ENCODE measurements at regions of chr15 and their contacts with region 1.

Region 1: DNA sequence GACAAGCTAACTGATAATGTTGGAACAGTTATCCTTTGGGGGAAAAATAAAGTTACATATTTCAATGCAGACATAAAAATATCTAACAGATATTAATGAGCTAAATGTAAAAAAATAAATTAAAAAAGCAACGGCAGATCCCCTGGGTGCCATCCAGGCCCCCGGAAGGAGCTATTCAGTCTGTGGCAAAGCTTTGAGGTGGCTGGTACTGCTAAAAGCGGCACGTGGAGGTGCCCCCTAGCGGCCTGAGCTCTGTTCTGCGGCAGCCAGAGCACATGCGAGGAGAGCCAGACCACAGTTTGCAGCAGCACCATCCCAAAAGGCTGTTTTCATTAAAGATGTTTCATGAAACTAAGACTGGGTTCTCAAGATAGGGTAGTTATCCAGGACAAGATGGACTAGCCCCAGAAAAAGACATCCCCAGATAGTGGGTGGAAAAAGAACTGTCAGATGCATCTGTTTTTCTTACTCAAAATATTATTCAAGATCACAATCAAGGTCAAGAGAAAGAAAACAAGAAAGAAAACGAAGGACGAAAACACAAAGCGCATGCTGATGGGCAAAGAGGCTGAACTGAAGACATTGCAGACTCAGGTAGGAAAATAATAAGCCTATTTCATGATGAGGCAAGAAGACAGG is 18.7 kb downstream of the AP3S2 start:
- DNase-seq: peak; percentile 69
- H3K4me3 Mint-ChIP-seq: no peak overlapping the region
- H3K27ac Mint-ChIP-seq: no peak overlapping the region
- H3K4me1 Mint-ChIP-seq: peaks cover 4% of the 10 kb centered on the region
- H3K27me3 Mint-ChIP-seq: no peaks in the 10 kb centered on the region

Region 2: GRCh38 chr15:89740137-89740536 is 134.9 kb before region 1 on chr15:
- intact Hi-C with region 1: loop called (anchors 2 kb)
- DNase-seq: peak; percentile 56
- H3K4me3 Mint-ChIP-seq: no peak overlapping the region
- H3K27ac Mint-ChIP-seq: no peak overlapping the region
- H3K4me1 Mint-ChIP-seq: peaks cover 2% of the 10 kb centered on the region
- H3K27me3 Mint-ChIP-seq: peaks cover 6% of the 10 kb centered on the region